ENCODE measurements at regions of chr3 and their contacts with region 1.

Region 1: DNA sequence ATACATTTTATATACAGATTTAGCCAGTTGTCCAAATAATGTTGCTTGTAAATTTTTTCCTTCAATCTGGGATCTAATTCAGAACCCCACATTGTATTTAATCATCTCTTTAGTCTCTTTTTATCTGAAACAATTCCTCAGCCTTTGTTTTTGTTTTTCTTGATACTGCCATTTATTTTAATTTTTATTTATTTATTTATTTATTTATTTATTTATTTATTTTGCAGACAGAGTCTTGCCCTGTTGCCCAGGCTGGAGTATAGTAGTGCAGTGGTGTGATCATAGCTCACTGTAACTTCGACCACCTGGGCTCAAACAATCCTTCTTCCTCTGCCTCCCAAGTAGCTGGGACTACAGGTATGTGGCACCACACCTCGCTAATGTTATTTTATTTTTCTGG is 61.5 kb downstream of the CHCHD4 start:
- DNase-seq: no peak
- ATAC-seq: no peak
- H3K4me3 ChIP-seq: no peak overlapping the region
- H3K27ac ChIP-seq: no peak overlapping the region
- H3K4me1 ChIP-seq: no peaks in the 10 kb centered on the region
- H3K27me3 ChIP-seq: peaks cover 6 to 18% of the 10 kb centered on the region in 2 experiments; a peak in 3 of 5 replicates
- CTCF ChIP-seq: no peak
- EP300 ChIP-seq: no peak
- POLR2A ChIP-seq: no peak
- RAD21 ChIP-seq: no peak

Region 2: GRCh38 chr3:14047841-14048240 is 15.3 kb before region 1 on chr3:
- CTCF ChIA-PET with region 1: no interaction called
- POLR2A ChIA-PET with region 1: interaction called, 15 read pairs
- in situ Hi-C with region 1: no loop called
- intact Hi-C with region 1: no loop called
- DNase-seq: no peak
- ATAC-seq: no peak
- H3K4me3 ChIP-seq: no peak overlapping the region
- H3K27ac ChIP-seq: no peak overlapping the region
- H3K4me1 ChIP-seq: no peaks in the 10 kb centered on the region
- H3K27me3 ChIP-seq: peaks cover 4 to 5% of the 10 kb centered on the region in 2 experiments; a peak in 2 of 5 replicates
- CTCF ChIP-seq: no peak
- EP300 ChIP-seq: no peak
- POLR2A ChIP-seq: no peak
- RAD21 ChIP-seq: no peak

Region 3: GRCh38 chr3:14188041-14188754 is 125.0 kb after region 1 on chr3:
- CTCF ChIA-PET with region 1: no interaction called
- POLR2A ChIA-PET with region 1: no interaction called
- in situ Hi-C with region 1: no loop called
- intact Hi-C with region 1: no loop called
- DNase-seq: no peak
- ATAC-seq: peak; percentile 37; the same call in 1 of the 3 replicates
- H3K4me3 ChIP-seq: no peak overlapping the region
- H3K27ac ChIP-seq: no peak overlapping the region
- H3K4me1 ChIP-seq: no peaks in the 10 kb centered on the region
- H3K27me3 ChIP-seq: no peaks in the 10 kb centered on the region
- CTCF ChIP-seq: no peak
- EP300 ChIP-seq: no peak
- POLR2A ChIP-seq: no peak
- RAD21 ChIP-seq: no peak

Measured in K562 (cell line).